Heart left ventricle (tissue), 16 donors: ENCODE measurements at regions of chr12 and their contacts with region 1.

Region 1: DNA sequence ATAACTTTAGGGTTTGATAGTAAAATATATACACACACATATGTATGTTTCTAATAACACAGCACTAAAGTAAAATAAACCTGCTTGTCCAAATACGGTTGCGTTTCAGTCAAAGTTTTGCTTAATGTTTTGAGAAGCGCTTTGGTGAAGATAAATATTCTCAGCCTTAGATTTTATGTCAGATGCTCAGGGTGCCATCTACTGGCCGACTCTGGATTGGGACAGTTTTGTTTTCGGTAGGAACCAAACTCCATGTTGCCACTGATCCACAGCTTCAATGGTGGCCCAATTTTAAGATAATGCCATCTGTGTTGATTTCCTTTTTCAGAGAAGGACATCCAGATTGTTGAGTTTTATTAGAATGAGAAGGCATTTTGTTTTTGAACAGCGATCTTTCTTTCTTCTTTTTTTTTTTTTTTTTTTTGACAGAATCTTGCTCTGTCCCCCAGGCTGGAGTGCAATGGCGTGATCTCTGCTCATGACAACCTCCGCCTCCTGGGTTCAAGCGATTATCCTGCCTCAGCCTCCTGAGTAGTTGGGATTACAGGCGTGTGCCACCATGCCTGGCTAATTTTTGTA is 43.1 kb downstream of the LLPH start:
- DNase-seq: peak; percentile 38 to 64 (median 45)
- ATAC-seq: peak in 3 of 4 donors; percentile 45 to 69 (median 62)
- H3K4me3 ChIP-seq: no peak overlapping the region
- H3K27ac ChIP-seq: no peak overlapping the region
- H3K4me1 ChIP-seq: peaks cover 0 to 2% (median 0%) of the 10 kb centered on the region in 12 donors
- H3K27me3 ChIP-seq: peaks cover 0 to 4% (median 0%) of the 10 kb centered on the region in 9 donors
- CTCF ChIP-seq: peak; percentile 56 to 85 (median 77)
- POLR2A ChIP-seq: no peak

Region 2: GRCh38 chr12:65327207-65328076 is 760.0 kb before region 1 on chr12:
- intact Hi-C with region 1: loop called in 1 of 10 experiments (anchors 10 kb)
- DNase-seq: no peak
- ATAC-seq: peak; percentile 38 to 64 (median 54)
- H3K4me3 ChIP-seq: peak overlapping the region in 2 of 12 donors; percentile 0 to 3
- H3K27ac ChIP-seq: peak overlapping the region in 7 of 12 donors; percentile 19 to 59 (median 24)
- H3K4me1 ChIP-seq: peaks cover 0 to 42% (median 6%) of the 10 kb centered on the region in 12 donors
- H3K27me3 ChIP-seq: no peaks in the 10 kb centered on the region
- CTCF ChIP-seq: no peak
- POLR2A ChIP-seq: no peak

Region 3: DNA sequence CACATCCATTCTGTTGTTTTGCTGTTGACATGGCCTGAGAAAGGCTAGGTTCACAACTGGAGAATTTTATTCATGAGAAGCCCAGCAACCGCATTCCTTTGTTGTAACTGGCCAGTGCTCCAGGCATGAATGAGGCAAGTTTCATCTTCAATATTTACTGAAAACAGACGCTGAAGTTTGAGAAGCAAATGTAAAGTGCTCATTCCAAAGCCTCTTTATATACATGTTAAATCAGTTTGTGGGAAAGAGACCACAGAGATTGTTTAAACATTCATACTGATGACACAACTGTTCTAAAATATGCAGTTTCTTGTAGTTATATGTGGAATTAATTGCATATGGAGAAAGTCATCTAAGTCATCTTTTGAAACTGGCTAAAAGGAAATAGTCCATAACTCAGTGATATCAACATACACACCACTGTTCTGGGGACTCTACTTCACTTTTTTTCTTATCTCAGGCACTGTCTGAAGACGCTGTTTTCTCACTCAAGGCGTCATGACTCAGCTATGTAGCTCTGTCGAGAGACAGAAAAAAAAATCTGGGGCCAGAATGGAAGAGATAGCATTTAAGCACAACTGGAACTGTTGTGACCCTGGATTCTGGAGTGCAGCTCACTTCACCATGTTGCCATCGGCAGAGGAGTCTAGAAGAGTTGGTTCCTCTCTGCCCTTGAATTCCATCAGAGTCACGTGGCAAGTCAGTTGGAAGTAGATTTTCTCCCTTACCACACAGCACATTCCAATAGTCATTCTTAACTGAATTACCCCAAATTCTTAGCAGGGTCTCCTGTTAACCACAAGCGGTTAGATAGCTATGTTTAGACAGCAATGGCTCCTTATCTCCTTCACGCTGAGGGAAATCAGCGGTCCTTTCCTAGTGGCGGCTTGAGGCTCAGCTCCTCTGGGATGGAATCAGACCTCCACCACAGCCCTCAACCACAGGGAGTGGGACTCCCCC is 521.6 kb before region 1 on chr12:
- intact Hi-C with region 1: loop called in 1 of 10 experiments (anchors 10 kb)
- DNase-seq: no peak
- ATAC-seq: peak; percentile 20 to 75 (median 43)
- H3K4me3 ChIP-seq: no peak overlapping the region
- H3K27ac ChIP-seq: peak overlapping the region in 4 of 12 donors; percentile 6 to 63 (median 48)
- H3K4me1 ChIP-seq: peaks cover 0 to 26% (median 12%) of the 10 kb centered on the region in 12 donors
- H3K27me3 ChIP-seq: no peaks in the 10 kb centered on the region
- CTCF ChIP-seq: no peak
- POLR2A ChIP-seq: no peak

Region 4: GRCh38 chr12:65823513-65824375 is 263.7 kb before region 1 on chr12:
- intact Hi-C with region 1: loop called in 1 of 10 experiments (anchors 10 kb)
- DNase-seq: peak in 4 of 5 donors; percentile 11 to 58 (median 36)
- ATAC-seq: peak; percentile 43 to 71 (median 52)
- H3K4me3 ChIP-seq: peak overlapping the region; percentile 23 to 75 (median 56)
- H3K27ac ChIP-seq: no peak overlapping the region
- H3K4me1 ChIP-seq: peaks cover 0 to 36% (median 20%) of the 10 kb centered on the region in 12 donors
- H3K27me3 ChIP-seq: peaks cover 4 to 75% (median 45%) of the 10 kb centered on the region in 9 donors
- CTCF ChIP-seq: no peak
- POLR2A ChIP-seq: no peak

Region 5: DNA sequence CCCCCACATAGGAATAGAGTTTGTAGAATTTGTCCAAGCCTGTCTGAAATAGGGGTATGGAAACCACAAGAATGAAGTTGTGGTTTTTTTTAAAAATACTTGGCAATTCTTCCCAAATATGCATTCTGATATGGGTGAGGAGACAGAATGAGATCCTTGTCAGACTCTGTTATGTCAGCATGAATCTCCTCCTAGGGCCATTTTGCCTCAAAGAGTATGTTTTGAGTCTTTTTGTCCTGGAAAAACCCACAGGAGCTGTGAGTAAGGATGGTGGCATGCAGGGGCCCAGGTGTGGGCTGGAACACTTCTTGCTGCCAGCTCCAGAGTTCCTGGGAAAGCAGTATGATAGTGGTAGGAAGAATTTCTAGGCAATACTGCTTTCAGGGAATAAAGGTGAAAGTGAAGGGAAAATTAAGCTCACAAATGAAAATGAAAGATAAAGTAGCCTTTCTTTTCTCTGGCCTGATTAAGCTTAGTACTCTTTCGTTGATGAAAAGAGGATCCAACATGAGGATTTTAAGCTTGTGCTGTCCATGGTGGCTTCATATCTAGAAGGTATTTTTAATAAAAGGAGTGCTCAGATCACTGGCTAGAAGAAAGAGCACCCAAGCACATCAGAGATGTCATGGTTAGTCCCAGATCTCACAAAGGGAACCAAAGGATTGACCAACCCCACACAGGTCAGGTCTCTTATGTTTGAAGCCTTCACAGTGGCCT is 87.7 kb before region 1 on chr12:
- intact Hi-C with region 1: loop called in 1 of 10 experiments (anchors 10 kb)
- DNase-seq: no peak
- ATAC-seq: no peak
- H3K4me3 ChIP-seq: no peak overlapping the region
- H3K27ac ChIP-seq: no peak overlapping the region
- H3K4me1 ChIP-seq: peaks cover 0 to 2% (median 0%) of the 10 kb centered on the region in 12 donors
- H3K27me3 ChIP-seq: no peaks in the 10 kb centered on the region
- CTCF ChIP-seq: no peak
- POLR2A ChIP-seq: no peak